Endothelial cell of umbilical vein (primary cell): ENCODE measurements at regions of chr5 and their contacts with region 1.

Region 1: GRCh38 chr5:33299621-33300208 is 141.1 kb upstream of the TARS1 start:
- DNase-seq: peak; percentile 79
- H3K4me3 ChIP-seq: no peak overlapping the region
- H3K27ac ChIP-seq: no peak overlapping the region
- H3K4me1 ChIP-seq: no peaks in the 10 kb centered on the region
- H3K27me3 ChIP-seq: no peaks in the 10 kb centered on the region
- CTCF ChIP-seq: peak; percentile 24 to 44
- POLR2A ChIP-seq: no peak

Region 2: DNA sequence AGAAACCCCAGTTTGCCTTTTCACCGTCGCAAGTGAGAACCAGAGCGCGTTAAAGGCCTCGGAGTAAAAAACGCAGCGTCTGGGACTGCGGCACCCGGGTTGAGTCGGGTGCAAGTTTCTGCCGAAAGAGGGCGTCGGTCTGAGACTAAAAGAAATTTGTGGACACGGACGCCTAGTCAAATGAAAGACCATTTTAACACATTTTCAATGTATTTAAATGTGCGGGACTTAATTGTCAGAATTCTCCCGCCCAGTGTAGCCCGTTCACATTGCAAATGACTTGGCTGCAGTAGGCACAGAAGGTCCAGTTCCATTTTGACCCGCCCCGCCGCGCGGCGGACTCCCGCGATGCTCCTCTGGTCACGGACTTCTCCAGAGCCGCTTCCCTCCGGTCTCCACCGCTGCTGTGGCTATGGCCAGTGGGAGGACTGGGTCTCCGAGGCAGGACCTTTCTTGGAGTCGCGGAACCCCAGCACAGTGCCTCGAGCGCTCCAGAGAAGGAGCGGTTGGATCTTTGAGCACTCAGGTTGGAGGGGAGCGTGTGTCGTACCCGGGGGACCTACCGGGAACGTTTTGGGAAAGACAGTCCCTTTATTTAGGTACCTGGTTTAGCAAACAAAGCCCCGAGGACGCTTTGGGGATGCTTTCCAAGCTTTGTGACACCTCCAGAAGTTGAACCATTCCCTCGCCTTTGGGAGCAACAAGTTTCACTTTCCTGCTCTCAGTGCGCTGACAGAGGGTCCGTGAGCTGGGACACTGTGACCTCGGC is 589.8 kb before region 1 on chr5:
- CTCF ChIA-PET with region 1: interaction called, 8 read pairs
- POLR2A ChIA-PET with region 1: no interaction called
- dilution Hi-C with region 1: no loop called
- intact Hi-C with region 1: loop called (anchors 1 kb)
- DNase-seq: peak; percentile 75
- H3K4me3 ChIP-seq: peak overlapping the region; percentile 60 to 77 (median 65)
- H3K27ac ChIP-seq: no peak overlapping the region
- H3K4me1 ChIP-seq: peaks cover 11% of the 10 kb centered on the region
- H3K27me3 ChIP-seq: peaks cover 29 to 44% of the 10 kb centered on the region in 2 experiments
- CTCF ChIP-seq: peak; percentile 60 to 72
- POLR2A ChIP-seq: no peak

Region 3: DNA sequence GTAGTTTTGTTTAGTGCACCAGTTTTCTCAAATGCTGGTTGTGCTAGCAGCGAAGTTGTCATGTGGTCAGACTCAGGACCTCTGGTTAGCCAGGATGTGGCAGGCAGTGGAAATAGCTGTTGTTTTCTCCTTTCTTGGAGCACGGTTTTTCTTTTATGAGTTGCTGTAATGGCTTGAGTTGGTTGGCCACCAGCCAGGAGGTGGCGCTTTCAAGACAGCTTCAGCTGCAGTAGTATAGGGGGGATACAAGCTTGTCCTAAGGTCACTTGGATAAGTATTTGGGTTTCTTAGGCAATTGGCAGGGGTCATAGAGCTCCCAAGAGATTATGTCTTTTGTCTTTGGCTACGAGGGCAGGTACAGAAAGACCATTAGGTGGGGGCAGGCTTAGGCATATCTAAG is 133.2 kb before region 1 on chr5:
- CTCF ChIA-PET with region 1: interaction called, 14 read pairs
- POLR2A ChIA-PET with region 1: no interaction called
- dilution Hi-C with region 1: no loop called
- intact Hi-C with region 1: no loop called
- DNase-seq: peak; percentile 17
- H3K4me3 ChIP-seq: no peak overlapping the region
- H3K27ac ChIP-seq: no peak overlapping the region
- H3K4me1 ChIP-seq: no peaks in the 10 kb centered on the region
- H3K27me3 ChIP-seq: no peaks in the 10 kb centered on the region
- CTCF ChIP-seq: no peak
- POLR2A ChIP-seq: no peak

Region 4: DNA sequence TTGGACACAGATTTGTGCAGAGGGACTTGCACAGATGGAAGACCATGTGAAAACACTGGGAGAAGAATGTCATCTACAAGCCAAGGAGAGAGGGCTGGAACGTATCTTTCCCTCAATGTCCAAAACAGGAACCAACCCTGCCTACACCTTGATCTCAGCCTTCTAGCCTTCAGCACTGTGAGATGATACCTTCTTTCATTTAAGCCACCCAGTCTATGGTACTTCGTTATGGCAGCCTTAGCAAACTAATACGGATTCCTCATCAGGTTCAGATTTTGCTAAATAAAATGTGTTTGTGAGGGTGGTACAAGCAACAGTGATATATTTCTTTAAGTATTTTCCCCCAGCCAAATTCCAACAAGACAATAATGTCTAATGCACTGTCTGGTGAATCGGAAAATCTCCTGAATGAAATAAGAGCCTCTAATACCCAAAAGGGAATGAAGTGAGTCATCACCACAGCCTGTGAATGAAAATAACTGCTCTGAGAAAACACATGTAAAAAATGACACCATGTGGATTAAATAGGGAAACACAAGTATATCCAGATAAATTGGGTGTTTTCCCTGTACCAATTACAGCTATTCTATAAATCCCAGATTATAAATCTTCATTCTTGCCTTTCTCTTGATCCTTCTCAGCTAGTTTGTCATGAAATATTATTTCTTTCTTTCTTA is 41.8 kb before region 1 on chr5:
- CTCF ChIA-PET with region 1: interaction called, 10 read pairs
- POLR2A ChIA-PET with region 1: no interaction called
- dilution Hi-C with region 1: no loop called
- intact Hi-C with region 1: no loop called
- DNase-seq: peak; percentile 80
- H3K4me3 ChIP-seq: no peak overlapping the region
- H3K27ac ChIP-seq: no peak overlapping the region
- H3K4me1 ChIP-seq: peaks cover 9% of the 10 kb centered on the region
- H3K27me3 ChIP-seq: no peaks in the 10 kb centered on the region
- CTCF ChIP-seq: no peak
- POLR2A ChIP-seq: no peak

Region 5: GRCh38 chr5:33310451-33310850 is 10.7 kb after region 1 on chr5:
- CTCF ChIA-PET with region 1: interaction called, 10 read pairs
- POLR2A ChIA-PET with region 1: no interaction called
- dilution Hi-C with region 1: no loop called
- intact Hi-C with region 1: no loop called
- DNase-seq: no peak
- H3K4me3 ChIP-seq: no peak overlapping the region
- H3K27ac ChIP-seq: no peak overlapping the region
- H3K4me1 ChIP-seq: no peaks in the 10 kb centered on the region
- H3K27me3 ChIP-seq: no peaks in the 10 kb centered on the region
- CTCF ChIP-seq: no peak
- POLR2A ChIP-seq: no peak

Region 6: DNA sequence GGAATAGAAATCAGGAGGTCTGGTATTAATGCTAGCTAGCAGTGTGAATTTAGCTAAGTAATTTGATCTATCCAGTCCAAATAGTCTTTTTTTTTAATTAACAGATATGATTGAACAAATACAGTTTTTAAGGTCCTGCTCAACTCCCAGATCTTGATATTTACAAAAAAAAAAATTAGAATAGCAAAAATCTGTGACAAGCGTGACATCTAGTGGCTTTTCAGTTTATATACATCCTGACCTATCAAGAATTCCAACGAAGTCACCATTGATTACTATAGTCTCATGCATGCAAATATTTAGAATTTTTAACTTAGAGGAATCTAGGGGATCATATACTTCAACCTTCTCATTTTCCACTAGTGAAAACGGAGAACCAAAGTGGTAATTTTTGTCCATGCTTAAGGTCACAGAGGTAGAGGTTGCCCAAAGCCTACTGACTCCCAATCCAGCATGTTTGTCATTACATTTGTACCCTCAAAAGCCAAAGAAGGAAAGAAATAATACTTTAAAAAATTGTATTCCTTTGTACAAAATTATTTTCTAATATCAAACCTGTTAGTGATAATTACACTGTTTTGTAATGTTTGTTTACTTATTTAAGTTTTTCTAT is 123.4 kb after region 1 on chr5:
- CTCF ChIA-PET with region 1: interaction called, 5 read pairs
- POLR2A ChIA-PET with region 1: no interaction called
- dilution Hi-C with region 1: no loop called
- intact Hi-C with region 1: loop called (anchors 1 kb)
- DNase-seq: peak; percentile 66
- H3K4me3 ChIP-seq: no peak overlapping the region
- H3K27ac ChIP-seq: no peak overlapping the region
- H3K4me1 ChIP-seq: no peaks in the 10 kb centered on the region
- H3K27me3 ChIP-seq: peaks cover 0 to 2% of the 10 kb centered on the region in 2 experiments
- CTCF ChIP-seq: peak; percentile 11 to 17
- POLR2A ChIP-seq: no peak

Region 7: DNA sequence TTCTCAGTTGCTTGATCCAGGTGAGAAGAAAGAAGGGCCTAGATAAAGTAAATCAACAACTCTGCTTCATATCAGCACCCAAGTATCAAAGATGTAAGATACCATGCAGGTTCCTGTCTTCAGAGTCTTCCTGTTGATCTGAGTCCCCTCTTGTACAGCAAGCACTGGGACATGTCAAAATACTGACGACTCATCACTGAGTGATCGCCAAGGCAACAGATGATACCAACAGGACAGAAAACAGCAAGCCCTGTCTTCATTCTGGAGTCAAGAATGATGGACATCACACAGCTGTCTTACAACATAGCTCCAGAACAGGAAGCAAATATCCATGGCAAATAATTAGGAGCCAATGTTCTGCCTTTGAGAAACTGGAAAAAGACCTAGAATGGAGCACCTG is 224.8 kb after region 1 on chr5:
- CTCF ChIA-PET with region 1: no interaction called
- POLR2A ChIA-PET with region 1: no interaction called
- dilution Hi-C with region 1: no loop called
- intact Hi-C with region 1: no loop called
- DNase-seq: no peak
- H3K4me3 ChIP-seq: no peak overlapping the region
- H3K27ac ChIP-seq: no peak overlapping the region
- H3K4me1 ChIP-seq: no peaks in the 10 kb centered on the region
- H3K27me3 ChIP-seq: no peaks in the 10 kb centered on the region
- CTCF ChIP-seq: no peak
- POLR2A ChIP-seq: no peak